Natural killer cell (primary cell): ENCODE measurements at regions of chr16 and their contacts with region 1.

Region 1: DNA sequence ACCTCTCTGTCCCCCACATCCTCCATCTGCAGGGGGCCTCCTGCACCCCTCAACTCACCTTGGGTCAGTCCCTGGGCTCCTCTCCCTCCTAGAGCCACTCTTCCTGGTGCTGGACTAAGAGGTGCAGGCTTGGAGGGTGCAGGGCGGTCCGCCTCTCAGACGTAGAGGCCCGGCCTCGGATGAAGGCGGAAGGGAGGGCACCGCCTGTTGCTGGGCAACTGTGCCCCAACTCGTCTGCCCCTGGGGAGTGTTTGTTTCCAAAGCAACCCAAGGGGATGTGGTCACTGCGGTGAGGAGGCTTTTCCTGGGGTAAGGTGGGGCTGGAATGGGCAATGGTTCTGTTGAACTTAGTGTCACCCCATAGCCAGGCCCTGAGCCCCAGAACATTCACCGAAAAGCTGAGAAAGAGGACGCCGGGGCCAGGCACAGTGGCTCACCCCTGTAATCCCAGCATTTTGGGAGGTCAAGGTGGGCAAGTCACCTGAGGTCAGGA is at the start of gene C16orf54:
- DNase-seq: peak; percentile 88 to 97
- ATAC-seq: peak; percentile 82 to 95 (median 88)
- H3K4me3 ChIP-seq: peak within 1 kb of the TSS; percentile 100
- H3K4me3 Mint-ChIP-seq: peak within 1 kb of the TSS; percentile 100
- H3K27ac ChIP-seq: peak within 1 kb of the TSS; percentile 100
- H3K27ac Mint-ChIP-seq: peak within 1 kb of the TSS; percentile 99
- H3K4me1 ChIP-seq: peaks cover 74% of the 10 kb centered on the region
- H3K4me1 Mint-ChIP-seq: peaks cover 43 to 71% of the 10 kb centered on the region in 2 donors
- H3K27me3 ChIP-seq: no peaks in the 10 kb centered on the region
- H3K27me3 Mint-ChIP-seq: no peaks in the 10 kb centered on the region
- CTCF ChIP-seq: no peak
- total RNA-seq, gene C16orf54: 100.0 to 172 (median 146) TPM

Region 2: DNA sequence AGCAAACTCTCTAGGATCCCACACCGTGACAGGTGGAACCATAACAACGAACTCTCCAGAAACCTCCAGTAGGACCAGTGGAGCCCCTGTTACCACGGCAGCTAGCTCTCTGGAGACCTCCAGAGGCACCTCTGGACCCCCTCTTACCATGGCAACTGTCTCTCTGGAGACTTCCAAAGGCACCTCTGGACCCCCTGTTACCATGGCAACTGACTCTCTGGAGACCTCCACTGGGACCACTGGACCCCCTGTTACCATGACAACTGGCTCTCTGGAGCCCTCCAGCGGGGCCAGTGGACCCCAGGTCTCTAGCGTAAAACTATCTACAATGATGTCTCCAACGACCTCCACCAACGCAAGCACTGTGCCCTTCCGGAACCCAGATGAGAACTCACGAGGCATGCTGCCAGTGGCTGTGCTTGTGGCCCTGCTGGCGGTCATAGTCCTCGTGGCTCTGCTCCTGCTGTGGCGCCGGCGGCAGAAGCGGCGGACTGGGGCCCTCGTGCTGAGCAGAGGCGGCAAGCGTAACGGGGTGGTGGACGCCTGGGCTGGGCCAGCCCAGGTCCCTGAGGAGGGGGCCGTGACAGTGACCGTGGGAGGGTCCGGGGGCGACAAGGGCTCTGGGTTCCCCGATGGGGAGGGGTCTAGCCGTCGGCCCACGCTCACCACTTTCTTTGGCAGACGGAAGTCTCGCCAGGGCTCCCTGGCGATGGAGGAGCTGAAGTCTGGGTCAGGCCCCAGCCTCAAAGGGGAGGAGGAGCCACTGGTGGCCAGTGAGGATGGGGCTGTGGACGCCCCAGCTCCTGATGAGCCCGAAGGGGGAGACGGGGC is 81.6 kb before region 1 on chr16:
- intact Hi-C with region 1: loop called (anchors 10 kb)
- DNase-seq: peak; percentile 47 to 70
- ATAC-seq: peak; percentile 21 to 48 (median 38)
- H3K4me3 ChIP-seq: peak overlapping the region; percentile 90
- H3K4me3 Mint-ChIP-seq: peak overlapping the region; percentile 99
- H3K27ac ChIP-seq: peak overlapping the region; percentile 81
- H3K27ac Mint-ChIP-seq: peak overlapping the region; percentile 92 to 99
- H3K4me1 ChIP-seq: peaks cover 82% of the 10 kb centered on the region
- H3K4me1 Mint-ChIP-seq: peaks cover 55 to 82% of the 10 kb centered on the region in 2 donors
- H3K27me3 ChIP-seq: no peaks in the 10 kb centered on the region
- H3K27me3 Mint-ChIP-seq: no peaks in the 10 kb centered on the region
- CTCF ChIP-seq: no peak

Region 3: DNA sequence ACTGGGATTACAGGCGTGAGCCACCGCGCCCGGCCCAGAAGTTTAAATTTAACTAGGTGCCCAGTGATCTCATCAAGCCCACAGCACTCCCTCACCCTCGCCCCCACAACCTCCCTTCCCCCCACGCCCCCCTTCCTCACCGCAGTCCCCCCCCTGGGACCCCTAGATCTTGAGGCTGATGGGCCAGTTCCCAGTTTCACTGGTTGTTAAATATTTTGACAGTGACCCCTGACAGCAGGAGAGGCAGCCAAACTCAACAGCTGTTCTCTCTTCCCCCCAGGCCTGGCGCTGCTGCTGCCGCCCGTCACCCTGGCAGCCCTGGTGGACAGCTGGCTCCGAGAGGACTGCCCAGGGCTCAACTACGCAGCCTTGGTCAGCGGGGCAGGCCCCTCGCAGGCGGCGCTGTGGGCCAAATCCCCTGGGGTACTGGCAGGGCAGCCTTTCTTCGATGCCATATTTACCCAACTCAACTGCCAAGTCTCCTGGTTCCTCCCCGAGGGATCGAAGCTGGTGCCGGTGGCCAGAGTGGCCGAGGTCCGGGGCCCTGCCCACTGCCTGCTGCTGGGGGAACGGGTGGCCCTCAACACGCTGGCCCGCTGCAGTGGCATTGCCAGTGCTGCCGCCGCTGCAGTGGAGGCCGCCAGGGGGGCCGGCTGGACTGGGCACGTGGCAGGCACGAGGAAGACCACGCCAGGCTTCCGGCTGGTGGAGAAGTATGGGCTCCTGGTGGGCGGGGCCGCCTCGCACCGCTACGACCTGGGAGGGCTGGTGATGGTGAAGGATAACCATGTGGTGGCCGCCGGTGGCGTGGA is 51.3 kb before region 1 on chr16:
- intact Hi-C with region 1: no loop called
- DNase-seq: no peak
- ATAC-seq: no peak
- H3K4me3 ChIP-seq: no peak overlapping the region
- H3K4me3 Mint-ChIP-seq: no peak overlapping the region
- H3K27ac ChIP-seq: no peak overlapping the region
- H3K27ac Mint-ChIP-seq: no peak overlapping the region
- H3K4me1 ChIP-seq: peaks cover 8% of the 10 kb centered on the region
- H3K4me1 Mint-ChIP-seq: peaks cover 4 to 15% of the 10 kb centered on the region in 2 donors
- H3K27me3 ChIP-seq: no peaks in the 10 kb centered on the region
- H3K27me3 Mint-ChIP-seq: peaks cover 0 to 3% of the 10 kb centered on the region in 2 donors
- CTCF ChIP-seq: no peak

Region 4: DNA sequence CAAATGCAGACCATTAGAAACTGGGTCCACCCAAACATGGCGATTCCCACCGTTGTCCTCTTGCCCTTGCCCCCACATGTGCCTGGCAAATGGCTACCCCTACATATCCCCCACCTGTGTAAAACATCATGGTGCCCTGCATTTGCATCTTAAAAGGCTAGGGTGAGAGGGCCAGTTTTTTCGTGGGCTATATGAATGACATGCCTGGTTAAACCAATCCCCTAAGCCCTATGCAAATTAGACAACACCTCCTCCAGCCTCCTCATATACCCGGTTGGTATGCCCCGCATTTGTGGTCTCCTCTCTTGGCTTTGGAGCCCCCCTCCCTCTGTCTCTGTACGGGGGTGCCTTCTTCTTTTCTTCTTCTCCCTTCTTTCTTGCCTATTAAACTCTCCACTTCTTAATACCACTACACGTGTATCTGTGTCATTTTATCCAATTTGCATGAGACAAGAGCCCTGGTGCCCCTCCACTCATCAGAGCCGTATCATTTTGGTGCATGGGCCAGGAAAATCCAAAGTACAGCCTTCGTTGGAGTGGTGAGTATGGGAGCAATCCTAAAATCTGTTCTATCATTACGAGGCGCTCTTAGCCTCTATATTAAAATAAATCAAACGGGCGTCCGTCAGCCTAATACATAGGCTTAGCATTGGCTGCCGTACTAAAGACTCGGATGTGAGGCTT is 36.8 kb before region 1 on chr16:
- intact Hi-C with region 1: no loop called
- DNase-seq: no peak
- ATAC-seq: no peak
- H3K4me3 ChIP-seq: no peak overlapping the region
- H3K4me3 Mint-ChIP-seq: no peak overlapping the region
- H3K27ac ChIP-seq: no peak overlapping the region
- H3K27ac Mint-ChIP-seq: no peak overlapping the region
- H3K4me1 ChIP-seq: peaks cover 2% of the 10 kb centered on the region
- H3K4me1 Mint-ChIP-seq: peaks cover 9 to 12% of the 10 kb centered on the region in 2 donors
- H3K27me3 ChIP-seq: no peaks in the 10 kb centered on the region
- H3K27me3 Mint-ChIP-seq: no peaks in the 10 kb centered on the region
- CTCF ChIP-seq: no peak

Region 5: DNA sequence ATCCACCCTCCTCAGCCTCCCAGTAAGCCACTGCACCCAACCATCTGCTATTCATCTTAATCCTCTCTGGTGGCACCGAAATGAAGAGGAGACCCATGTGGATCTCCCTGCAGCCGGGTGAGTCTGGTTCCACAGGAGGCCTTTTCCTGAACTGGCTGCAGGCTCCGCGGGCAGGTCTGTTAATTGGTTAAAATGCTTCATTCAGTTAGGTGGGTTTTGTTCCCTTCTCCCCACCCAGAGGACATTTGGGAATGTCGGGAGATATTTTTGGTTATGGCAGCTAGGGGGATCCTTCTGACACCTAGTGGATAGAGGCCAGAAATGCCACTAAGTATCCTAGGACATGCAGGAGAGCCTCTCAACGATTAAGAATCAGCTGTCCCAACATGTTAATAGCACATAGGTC is 16.8 kb before region 1 on chr16:
- intact Hi-C with region 1: loop called (anchors 2 kb)
- DNase-seq: peak in 1 of 2 donors; percentile 42
- ATAC-seq: no peak
- H3K4me3 ChIP-seq: no peak overlapping the region
- H3K4me3 Mint-ChIP-seq: no peak overlapping the region
- H3K27ac ChIP-seq: no peak overlapping the region
- H3K27ac Mint-ChIP-seq: no peak overlapping the region
- H3K4me1 ChIP-seq: peaks cover 35% of the 10 kb centered on the region
- H3K4me1 Mint-ChIP-seq: peaks cover 21 to 28% of the 10 kb centered on the region in 2 donors
- H3K27me3 ChIP-seq: no peaks in the 10 kb centered on the region
- H3K27me3 Mint-ChIP-seq: no peaks in the 10 kb centered on the region
- CTCF ChIP-seq: no peak

Region 6: GRCh38 chr16:29784901-29785500 is 39.1 kb after region 1 on chr16:
- intact Hi-C with region 1: loop called (anchors 1 kb)
- DNase-seq: peak; percentile 70 to 87
- ATAC-seq: peak; percentile 93 to 99 (median 99)
- H3K4me3 ChIP-seq: no peak overlapping the region
- H3K4me3 Mint-ChIP-seq: peak overlapping the region; percentile 79
- H3K27ac ChIP-seq: no peak overlapping the region
- H3K27ac Mint-ChIP-seq: peak overlapping the region in 1 of 2 donors; percentile 61
- H3K4me1 ChIP-seq: peaks cover 16% of the 10 kb centered on the region
- H3K4me1 Mint-ChIP-seq: peaks cover 10 to 11% of the 10 kb centered on the region in 2 donors
- H3K27me3 ChIP-seq: no peaks in the 10 kb centered on the region
- H3K27me3 Mint-ChIP-seq: no peaks in the 10 kb centered on the region
- CTCF ChIP-seq: peak; percentile 79

Region 7: GRCh38 chr16:29790183-29790952 is 44.5 kb after region 1 on chr16 and contains the start of gene KIF22:
- intact Hi-C with region 1: loop called (anchors 1 kb)
- DNase-seq: peak; percentile 99 to 100
- ATAC-seq: peak; percentile 92 to 97 (median 93)
- H3K4me3 ChIP-seq: peak within 1 kb of the TSS; percentile 99
- H3K4me3 Mint-ChIP-seq: peak within 1 kb of the TSS; percentile 96
- H3K27ac ChIP-seq: peak within 1 kb of the TSS; percentile 82
- H3K27ac Mint-ChIP-seq: peak within 1 kb of the TSS; percentile 92
- H3K4me1 ChIP-seq: peaks cover 34% of the 10 kb centered on the region
- H3K4me1 Mint-ChIP-seq: peaks cover 43% of the 10 kb centered on the region in 2 donors
- H3K27me3 ChIP-seq: no peaks in the 10 kb centered on the region
- H3K27me3 Mint-ChIP-seq: no peaks in the 10 kb centered on the region
- CTCF ChIP-seq: peak; percentile 79
- total RNA-seq, gene KIF22: 73.4 to 96.0 (median 86.5) TPM

Region 8: DNA sequence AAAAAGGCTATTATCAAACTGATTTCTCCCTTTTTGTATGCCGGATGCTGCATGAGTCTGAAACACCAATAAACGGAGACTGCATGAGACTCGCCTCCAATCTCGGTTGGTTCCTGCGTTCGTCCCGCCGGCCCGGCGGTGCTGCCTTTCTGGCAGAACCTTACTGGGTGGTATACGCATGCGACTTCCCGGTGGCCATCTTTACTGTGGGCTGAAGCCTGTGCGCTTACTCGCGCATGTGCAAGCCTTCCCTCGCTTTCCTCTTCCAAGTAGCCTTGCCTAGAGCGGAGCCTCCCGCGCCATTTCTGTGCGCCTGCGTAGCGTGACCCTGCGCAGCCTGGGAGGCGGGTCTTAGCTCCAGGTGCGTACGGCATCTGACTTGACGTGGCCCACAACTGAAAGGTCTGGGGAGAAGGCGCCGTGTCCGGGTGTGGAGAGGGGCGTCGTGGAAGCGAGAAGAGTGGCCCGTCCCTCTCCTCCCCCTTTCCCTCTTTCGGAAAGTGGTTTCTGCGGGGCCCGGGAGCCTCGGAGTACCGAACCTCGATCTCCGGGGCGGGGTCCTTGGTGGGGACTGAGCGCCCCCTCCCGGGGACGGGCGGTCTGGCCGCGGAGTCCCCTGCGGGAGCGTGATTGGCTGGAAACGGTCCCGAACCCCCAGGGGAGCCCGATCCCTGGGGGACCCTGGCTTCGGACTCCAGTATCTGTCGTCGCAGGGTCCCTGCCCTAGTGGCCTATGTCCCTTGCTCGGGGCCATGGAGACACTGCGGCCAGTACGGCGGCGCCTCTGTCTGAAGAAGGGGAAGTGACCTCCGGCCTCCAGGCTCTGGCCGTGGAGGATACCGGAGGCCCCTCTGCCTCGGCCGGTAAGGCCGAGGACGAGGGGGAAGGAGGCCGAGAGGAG is 70.1 kb after region 1 on chr16 and contains the start of gene PAGR1:
- intact Hi-C with region 1: loop called (anchors 1 kb)
- DNase-seq: peak; percentile 96 to 100
- ATAC-seq: peak; percentile 76 to 91 (median 78)
- H3K4me3 ChIP-seq: peak within 1 kb of the TSS; percentile 79
- H3K4me3 Mint-ChIP-seq: peak within 1 kb of the TSS; percentile 99
- H3K27ac ChIP-seq: peak within 1 kb of the TSS; percentile 88
- H3K27ac Mint-ChIP-seq: peak within 1 kb of the TSS; percentile 94 to 98
- H3K4me1 ChIP-seq: peaks cover 63% of the 10 kb centered on the region
- H3K4me1 Mint-ChIP-seq: peaks cover 59 to 81% of the 10 kb centered on the region in 2 donors
- H3K27me3 ChIP-seq: no peaks in the 10 kb centered on the region
- H3K27me3 Mint-ChIP-seq: peaks cover 0 to 2% of the 10 kb centered on the region in 2 donors
- CTCF ChIP-seq: peak; percentile 97
- total RNA-seq, gene PAGR1: 8.9 to 16.2 (median 13.4) TPM